ENCODE measurements at regions of chr6 and their contacts with region 1.

Region 1: GRCh38 chr6:111852725-111853124 is 20.5 kb downstream of the FYN start:
- DNase-seq: no peak
- CTCF ChIP-seq: no peak

Region 2: GRCh38 chr6:111864138-111865048 is 11.7 kb after region 1 on chr6:
- CTCF ChIA-PET with region 1: interaction called, 14 read pairs
- POLR2A ChIA-PET with region 1: interaction called, 5 read pairs
- DNase-seq: no peak
- CTCF ChIP-seq: no peak

Region 3: GRCh38 chr6:111950661-111951496 is 98.2 kb after region 1 on chr6:
- CTCF ChIA-PET with region 1: no interaction called
- POLR2A ChIA-PET with region 1: no interaction called
- DNase-seq: no peak
- CTCF ChIP-seq: no peak